ENCODE measurements at regions of chr16 and their contacts with region 1.

Region 1: DNA sequence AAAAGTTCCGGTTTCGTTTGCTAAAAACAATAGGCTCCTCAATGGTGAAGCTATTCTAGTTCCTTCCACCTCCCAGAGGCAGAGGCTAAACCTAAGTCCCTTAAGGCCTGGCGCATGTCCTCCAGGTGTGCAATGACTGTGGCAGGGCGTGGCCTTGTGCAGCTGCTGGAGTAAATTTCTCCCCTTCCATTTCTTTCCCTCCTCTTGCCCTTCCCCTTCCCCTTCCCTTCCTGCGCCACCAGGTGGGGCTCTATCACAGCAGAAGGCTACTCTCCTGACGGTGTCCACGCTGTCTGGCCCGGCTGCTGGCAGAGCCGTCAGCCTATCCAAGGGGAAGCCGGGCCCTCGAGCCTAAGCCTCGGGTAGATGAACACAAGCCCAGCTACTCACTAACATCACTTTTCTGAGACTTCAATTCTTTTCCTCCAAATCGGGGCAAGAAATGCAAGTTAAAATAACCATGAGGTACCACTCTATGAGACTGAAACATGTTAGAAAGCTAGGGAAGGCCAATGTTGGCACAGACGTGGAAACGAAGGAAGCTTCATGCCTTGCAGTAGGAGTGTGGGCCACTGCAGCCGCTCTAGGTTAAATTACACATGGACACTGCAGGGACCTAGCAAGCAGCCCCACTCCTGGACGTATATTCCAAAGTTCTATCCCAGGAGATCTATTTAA is 34.4 kb downstream of the C16orf78 start:
- DNase-seq: peak; percentile 46 to 59
- H3K4me3 ChIP-seq: no peak overlapping the region
- H3K27ac ChIP-seq: no peak overlapping the region
- H3K4me1 ChIP-seq: no peaks in the 10 kb centered on the region
- H3K27me3 ChIP-seq: no peaks in the 10 kb centered on the region
- CTCF ChIP-seq: peak; percentile 70

Region 2: GRCh38 chr16:49012961-49013726 is 394.9 kb before region 1 on chr16:
- CTCF ChIA-PET with region 1: no interaction called
- POLR2A ChIA-PET with region 1: no interaction called
- intact Hi-C with region 1: no loop called
- DNase-seq: no peak
- H3K4me3 ChIP-seq: no peak overlapping the region
- H3K27ac ChIP-seq: no peak overlapping the region
- H3K4me1 ChIP-seq: no peaks in the 10 kb centered on the region
- H3K27me3 ChIP-seq: peaks cover 9% of the 10 kb centered on the region; the same call in 1 of the 2 replicates
- CTCF ChIP-seq: no peak

Region 3: DNA sequence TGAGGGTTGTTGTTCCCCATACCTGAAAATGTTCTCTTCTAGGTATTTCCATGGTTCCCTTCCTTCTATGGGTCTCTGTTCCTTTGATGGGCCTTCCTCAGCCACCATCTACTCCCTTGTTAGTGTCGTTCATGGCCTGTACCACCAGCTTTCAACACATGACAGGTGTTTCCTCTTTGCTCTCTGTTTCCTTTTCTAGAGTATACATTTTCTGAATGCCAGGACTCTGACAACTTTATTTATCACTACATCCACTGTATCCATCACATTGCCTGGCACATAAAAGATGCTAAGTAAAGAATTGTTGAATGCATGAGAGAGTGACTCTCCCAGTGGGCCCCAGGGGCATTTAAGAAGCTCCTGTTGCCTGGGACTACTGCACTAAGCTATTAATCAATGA is 381.4 kb before region 1 on chr16:
- CTCF ChIA-PET with region 1: no interaction called
- POLR2A ChIA-PET with region 1: no interaction called
- intact Hi-C with region 1: no loop called
- DNase-seq: no peak
- H3K4me3 ChIP-seq: no peak overlapping the region
- H3K27ac ChIP-seq: no peak overlapping the region
- H3K4me1 ChIP-seq: no peaks in the 10 kb centered on the region
- H3K27me3 ChIP-seq: peaks cover 50% of the 10 kb centered on the region
- CTCF ChIP-seq: no peak

Region 4: GRCh38 chr16:49382916-49383315 is 25.1 kb before region 1 on chr16:
- CTCF ChIA-PET with region 1: no interaction called
- POLR2A ChIA-PET with region 1: no interaction called
- intact Hi-C with region 1: no loop called
- DNase-seq: no peak
- H3K4me3 ChIP-seq: no peak overlapping the region
- H3K27ac ChIP-seq: no peak overlapping the region
- H3K4me1 ChIP-seq: no peaks in the 10 kb centered on the region
- H3K27me3 ChIP-seq: peaks cover 19% of the 10 kb centered on the region
- CTCF ChIP-seq: no peak; the same call in 1 of the 2 replicates

Region 5: DNA sequence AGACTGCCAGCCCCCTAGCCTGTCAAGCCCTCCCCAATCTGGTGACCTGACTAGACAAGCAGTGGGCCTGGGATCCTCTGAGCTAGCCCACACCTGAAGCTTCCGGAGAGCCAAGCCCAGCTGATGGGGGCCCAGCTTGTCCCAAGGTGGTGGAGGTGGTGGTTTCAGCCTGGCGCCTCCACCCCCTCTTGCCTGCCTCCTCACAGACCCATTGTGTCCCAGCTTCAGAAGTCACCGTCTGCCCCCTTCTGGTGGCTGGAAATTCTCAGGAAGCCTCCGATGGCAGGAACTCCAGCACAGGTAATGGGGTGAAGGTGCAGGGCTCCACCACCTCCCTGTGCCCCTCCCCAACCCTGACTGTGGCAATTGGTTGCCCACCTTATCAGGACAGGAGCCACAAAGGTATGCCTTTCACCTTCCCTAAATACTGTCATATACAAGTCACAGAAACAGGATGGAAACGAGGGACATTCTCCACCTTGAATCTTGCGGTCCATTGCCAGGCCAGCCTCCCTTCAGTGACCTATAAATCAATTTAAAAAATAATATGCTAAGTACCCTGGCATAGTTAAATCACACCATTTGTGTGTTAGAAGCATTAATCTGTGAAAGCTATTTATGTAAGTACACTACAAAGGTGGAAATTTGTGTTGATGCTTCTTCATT is 513.9 kb after region 1 on chr16:
- CTCF ChIA-PET with region 1: no interaction called
- POLR2A ChIA-PET with region 1: no interaction called
- intact Hi-C with region 1: loop called (anchors 5 kb)
- DNase-seq: peak in 1 of 2 experiments; percentile 25
- H3K4me3 ChIP-seq: no peak overlapping the region
- H3K27ac ChIP-seq: no peak overlapping the region
- H3K4me1 ChIP-seq: no peaks in the 10 kb centered on the region
- H3K27me3 ChIP-seq: peaks cover 44% of the 10 kb centered on the region
- CTCF ChIP-seq: peak; percentile 65

Measured in PC-9 (cell line).